Activated T-helper 1 cell treated with anti-CD3 and anti-CD28 coated beads, Interleukin-12 subunit alpha, Interleukin-12 subunit beta, Interleukin-2, Interleukin-4 antibody, amounts not matched to agents 30 ng/mL and 10 ng/mL and 1 ng/mL, durations not matched to agents 14 hours and 24 hours and 36 hours (primary cell): ENCODE measurements at regions of chrX and their contacts with region 1.

Region 1: DNA sequence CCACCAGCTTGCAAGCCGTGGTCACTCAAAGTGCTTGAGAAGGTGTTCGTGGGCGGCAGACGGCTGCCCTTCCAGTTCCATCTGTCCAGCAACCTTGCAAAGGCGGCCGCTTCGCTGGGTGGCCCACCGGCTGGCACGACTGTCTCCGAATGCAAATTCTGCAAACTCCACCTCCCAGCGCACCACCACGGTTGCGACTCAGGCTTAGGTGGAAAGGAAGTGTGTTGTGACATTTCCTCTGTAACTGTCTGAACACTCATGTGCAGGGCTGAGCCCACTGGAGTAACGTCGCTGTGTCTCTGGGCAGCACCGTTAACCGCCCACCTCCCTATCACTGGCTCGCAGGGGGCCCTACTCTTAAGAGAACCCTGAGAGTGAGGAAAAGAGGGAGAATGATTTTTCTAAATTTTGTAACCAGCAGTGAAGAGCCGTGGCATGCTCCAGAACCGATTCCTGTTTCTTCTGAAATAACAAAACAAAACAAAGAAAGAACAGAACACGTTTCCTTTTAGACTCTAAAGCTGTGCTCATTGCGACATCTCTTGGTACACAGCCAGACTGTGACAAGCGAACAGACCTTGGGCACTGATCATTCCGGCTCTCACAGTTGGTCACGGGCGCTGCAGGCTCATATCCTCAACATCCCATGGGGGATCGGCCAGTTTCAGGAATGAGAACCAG is at the start of gene P2RY8:
- DNase-seq: peak; percentile 74
- H3K4me3 Mint-ChIP-seq: peak within 1 kb of the TSS; percentile 89
- H3K27ac Mint-ChIP-seq: peak within 1 kb of the TSS; percentile 99
- H3K4me1 Mint-ChIP-seq: peaks cover 16% of the 10 kb centered on the region
- H3K27me3 Mint-ChIP-seq: no peaks in the 10 kb centered on the region
- total RNA-seq, gene P2RY8: 20.4 and 21.8 TPM in 2 replicates

Region 2: DNA sequence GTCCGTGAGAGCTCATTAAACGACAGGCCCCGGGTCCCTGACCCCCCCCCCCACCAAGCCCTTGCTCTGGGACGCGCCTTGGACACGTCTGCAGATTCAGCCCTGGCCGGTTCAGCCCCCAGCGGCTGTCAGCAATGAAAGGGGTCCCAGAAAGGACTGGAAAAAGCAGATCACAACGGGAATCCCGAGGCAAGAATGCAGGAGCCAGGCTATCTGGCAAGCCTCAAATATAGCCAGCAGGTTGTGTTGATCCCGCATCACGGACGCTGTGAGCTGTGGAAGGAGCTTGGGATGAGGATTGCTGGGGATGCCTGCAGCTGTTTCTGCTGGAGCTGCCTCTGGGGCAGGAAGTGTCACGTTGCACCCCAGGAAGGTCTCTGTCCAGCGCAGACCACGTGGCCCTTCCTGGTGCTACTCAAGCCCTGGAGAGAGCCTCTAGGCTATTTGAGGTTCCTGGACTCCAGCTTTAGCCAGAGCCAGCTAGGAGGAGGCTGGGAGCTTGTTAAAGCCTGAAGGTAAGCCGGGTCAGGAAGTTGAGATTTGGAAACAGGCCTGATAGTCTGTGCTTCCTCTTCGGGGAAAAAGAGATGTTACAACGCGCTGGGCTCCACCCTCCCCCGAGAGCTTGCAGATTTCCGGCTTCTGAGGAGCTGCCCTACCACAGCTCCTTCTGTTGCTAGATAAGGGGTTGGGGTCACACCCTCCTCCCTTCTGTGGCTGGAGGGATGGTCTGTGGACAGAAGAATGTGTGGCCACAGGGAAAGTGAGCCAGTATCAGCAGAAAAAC is 287.9 kb before region 1 on chrX:
- intact Hi-C with region 1: no loop called
- DNase-seq: peak; percentile 35
- H3K4me3 Mint-ChIP-seq: no peak overlapping the region
- H3K27ac Mint-ChIP-seq: peak overlapping the region; percentile 63
- H3K4me1 Mint-ChIP-seq: peaks cover 36% of the 10 kb centered on the region
- H3K27me3 Mint-ChIP-seq: peaks cover 2% of the 10 kb centered on the region

Region 3: DNA sequence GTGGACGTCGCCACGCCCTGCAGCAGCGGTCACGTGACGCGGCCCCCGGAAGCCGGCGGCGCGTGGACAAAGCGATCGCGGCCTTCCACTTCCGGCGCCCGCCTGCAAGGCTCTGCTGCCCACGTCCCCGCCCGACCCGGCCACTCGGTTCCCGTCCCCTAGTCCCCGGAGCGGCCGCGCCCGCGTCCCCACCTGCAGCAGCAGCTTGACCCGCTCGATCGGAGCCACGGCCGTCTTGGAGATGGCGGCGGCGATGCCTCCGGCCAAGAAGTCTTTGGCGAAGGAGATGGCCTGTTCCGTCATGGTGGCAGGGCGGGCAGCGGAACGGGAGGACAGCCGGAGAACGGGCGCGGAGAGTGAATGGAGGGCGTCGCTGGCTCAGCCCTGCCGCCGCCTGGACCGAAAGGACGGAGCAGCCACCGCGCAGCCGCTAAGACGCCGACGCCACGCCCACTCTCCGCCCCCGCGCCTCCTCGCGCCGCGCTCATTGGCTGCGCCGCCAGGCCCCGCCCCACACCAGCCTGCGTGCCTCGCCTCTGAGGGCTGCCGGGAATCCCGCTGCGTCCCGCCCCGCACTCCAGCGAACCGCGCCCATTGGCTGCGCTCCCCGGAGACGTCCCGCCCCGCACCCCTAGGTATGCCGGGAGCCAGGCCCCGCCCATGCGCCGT is 145.3 kb before region 1 on chrX and contains the start of gene SLC25A6:
- intact Hi-C with region 1: loop called (anchors 2 kb)
- DNase-seq: peak; percentile 100
- H3K4me3 Mint-ChIP-seq: peak within 1 kb of the TSS; percentile 93
- H3K27ac Mint-ChIP-seq: peak within 1 kb of the TSS; percentile 95
- H3K4me1 Mint-ChIP-seq: peaks cover 45% of the 10 kb centered on the region
- H3K27me3 Mint-ChIP-seq: no peaks in the 10 kb centered on the region
- total RNA-seq, gene SLC25A6: 281 and 289 TPM in 2 replicates

Region 4: DNA sequence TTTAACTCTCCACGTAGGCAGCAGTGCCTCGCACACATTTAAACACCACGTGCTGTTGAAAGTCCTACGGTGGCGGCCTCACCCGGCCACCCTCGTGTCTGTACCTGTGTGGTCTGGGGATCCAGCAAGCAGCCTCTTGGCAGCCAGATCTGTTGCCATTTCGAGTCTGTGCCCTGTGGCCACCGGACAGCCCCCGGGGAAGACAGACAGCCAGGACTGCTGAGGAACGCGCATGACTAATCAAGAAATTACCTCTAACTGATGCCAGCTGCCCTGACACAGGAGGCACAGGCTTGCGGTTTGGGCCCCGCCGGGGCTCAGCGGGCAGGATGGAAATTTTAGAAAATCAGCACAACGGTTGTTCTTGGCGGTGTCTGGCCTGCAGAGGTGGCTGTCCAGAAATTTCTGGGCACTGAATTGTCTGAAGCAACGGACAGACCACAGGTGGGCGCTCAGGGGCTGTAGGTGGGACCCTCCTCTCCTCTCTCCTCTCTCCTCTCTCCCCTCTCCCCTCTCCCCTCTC is 68.9 kb before region 1 on chrX:
- intact Hi-C with region 1: loop called (anchors 1 kb)
- DNase-seq: peak; percentile 61
- H3K4me3 Mint-ChIP-seq: peak overlapping the region; percentile 73
- H3K27ac Mint-ChIP-seq: peak overlapping the region; percentile 96
- H3K4me1 Mint-ChIP-seq: peaks cover 88% of the 10 kb centered on the region
- H3K27me3 Mint-ChIP-seq: no peaks in the 10 kb centered on the region

Region 5: GRCh38 chrX:1521459-1521956 is 15.7 kb before region 1 on chrX:
- intact Hi-C with region 1: loop called (anchors 2 kb)
- DNase-seq: peak; percentile 66
- H3K4me3 Mint-ChIP-seq: peak overlapping the region; percentile 71
- H3K27ac Mint-ChIP-seq: peak overlapping the region; percentile 81
- H3K4me1 Mint-ChIP-seq: peaks cover 55% of the 10 kb centered on the region
- H3K27me3 Mint-ChIP-seq: no peaks in the 10 kb centered on the region

Region 6: GRCh38 chrX:1554469-1555210 is 17.5 kb after region 1 on chrX:
- intact Hi-C with region 1: no loop called
- DNase-seq: peak; percentile 42
- H3K4me3 Mint-ChIP-seq: peak overlapping the region; percentile 37
- H3K27ac Mint-ChIP-seq: peak overlapping the region; percentile 61
- H3K4me1 Mint-ChIP-seq: peaks cover 31% of the 10 kb centered on the region
- H3K27me3 Mint-ChIP-seq: peaks cover 2% of the 10 kb centered on the region

Region 7: DNA sequence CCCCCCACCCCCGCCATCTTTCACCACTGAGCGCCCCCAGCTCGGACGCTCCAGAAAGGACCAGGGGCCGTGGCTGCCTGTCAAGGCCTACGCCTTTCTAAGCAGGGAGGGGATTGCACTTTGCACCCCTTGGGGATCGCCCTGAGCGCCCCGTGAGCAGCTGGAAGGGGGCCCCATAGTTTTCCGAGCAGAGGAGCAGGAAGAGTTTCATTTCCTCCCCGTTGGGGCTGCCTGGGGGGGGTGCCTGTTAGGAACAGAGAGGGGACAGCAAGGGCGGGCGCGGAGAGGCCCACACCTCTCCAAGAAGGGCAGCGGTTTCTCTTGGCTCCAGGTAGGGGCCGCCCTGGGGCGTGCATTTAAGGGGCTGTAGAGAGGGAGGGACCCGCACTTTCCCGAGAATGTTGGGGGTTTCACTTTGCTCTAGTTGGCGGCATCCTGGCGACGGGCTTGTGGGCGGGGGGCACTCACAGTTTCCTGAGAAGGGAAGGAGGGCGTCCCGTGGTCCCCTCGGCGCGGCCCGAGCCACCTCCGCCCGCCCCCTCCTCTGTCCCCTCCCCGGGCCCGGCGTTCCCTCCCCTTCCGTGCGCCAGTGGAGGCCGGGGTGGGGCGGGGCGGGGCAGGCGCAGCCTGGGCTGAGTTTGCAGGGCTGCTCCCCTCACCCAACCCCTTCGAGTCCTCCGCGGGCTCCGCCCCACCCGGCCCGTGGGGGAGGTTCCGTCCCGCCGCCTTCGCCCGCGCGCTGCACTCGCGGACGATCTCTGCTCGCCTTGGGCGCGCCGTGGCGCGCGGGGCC is 1071.7 kb after region 1 on chrX:
- intact Hi-C with region 1: loop called (anchors 2 kb)
- DNase-seq: peak; percentile 89
- H3K4me3 Mint-ChIP-seq: peak overlapping the region; percentile 91
- H3K27ac Mint-ChIP-seq: peak overlapping the region; percentile 89
- H3K4me1 Mint-ChIP-seq: peaks cover 47% of the 10 kb centered on the region
- H3K27me3 Mint-ChIP-seq: no peaks in the 10 kb centered on the region